A549 (cell line): ENCODE measurements at regions of chr3 and their contacts with region 1.

Region 1: GRCh38 chr3:127697551-127698240 is 24.9 kb downstream of the ABTB1 start:
- DNase-seq: peak; percentile 28 to 71
- ATAC-seq: peak; percentile 66 to 85; a peak in 5 of 6 replicates
- H3K4me3 ChIP-seq: no peak overlapping the region
- H3K27ac ChIP-seq: peak overlapping the region; percentile 68 to 87; a peak in 5 of 6 replicates
- H3K4me1 ChIP-seq: peaks cover 65% of the 10 kb centered on the region
- CTCF ChIP-seq: no peak
- EP300 ChIP-seq: no peak
- POLR2A ChIP-seq: no peak
- RAD21 ChIP-seq: no peak

Region 2: GRCh38 chr3:127679285-127680145 is 18.2 kb before region 1 on chr3:
- CTCF ChIA-PET with region 1: interaction called, 45 read pairs
- POLR2A ChIA-PET with region 1: no interaction called
- DNase-seq: no peak
- ATAC-seq: peak in 1 of 2 experiments; percentile 14; a peak in 1 of 6 replicates
- H3K4me3 ChIP-seq: no peak overlapping the region
- H3K27ac ChIP-seq: no peak overlapping the region
- H3K4me1 ChIP-seq: no peaks in the 10 kb centered on the region
- CTCF ChIP-seq: no peak
- EP300 ChIP-seq: no peak
- POLR2A ChIP-seq: no peak
- RAD21 ChIP-seq: no peak

Region 3: GRCh38 chr3:127750226-127751031 is 52.7 kb after region 1 on chr3:
- CTCF ChIA-PET with region 1: interaction called, 10 read pairs
- POLR2A ChIA-PET with region 1: no interaction called
- DNase-seq: no peak
- ATAC-seq: no peak
- H3K4me3 ChIP-seq: no peak overlapping the region
- H3K27ac ChIP-seq: peak overlapping the region; percentile 97 to 100
- H3K4me1 ChIP-seq: peaks cover 54% of the 10 kb centered on the region
- CTCF ChIP-seq: no peak
- EP300 ChIP-seq: no peak
- POLR2A ChIP-seq: no peak
- RAD21 ChIP-seq: no peak